ENCODE measurements at regions of chrX and their contacts with region 1.

Region 1: DNA sequence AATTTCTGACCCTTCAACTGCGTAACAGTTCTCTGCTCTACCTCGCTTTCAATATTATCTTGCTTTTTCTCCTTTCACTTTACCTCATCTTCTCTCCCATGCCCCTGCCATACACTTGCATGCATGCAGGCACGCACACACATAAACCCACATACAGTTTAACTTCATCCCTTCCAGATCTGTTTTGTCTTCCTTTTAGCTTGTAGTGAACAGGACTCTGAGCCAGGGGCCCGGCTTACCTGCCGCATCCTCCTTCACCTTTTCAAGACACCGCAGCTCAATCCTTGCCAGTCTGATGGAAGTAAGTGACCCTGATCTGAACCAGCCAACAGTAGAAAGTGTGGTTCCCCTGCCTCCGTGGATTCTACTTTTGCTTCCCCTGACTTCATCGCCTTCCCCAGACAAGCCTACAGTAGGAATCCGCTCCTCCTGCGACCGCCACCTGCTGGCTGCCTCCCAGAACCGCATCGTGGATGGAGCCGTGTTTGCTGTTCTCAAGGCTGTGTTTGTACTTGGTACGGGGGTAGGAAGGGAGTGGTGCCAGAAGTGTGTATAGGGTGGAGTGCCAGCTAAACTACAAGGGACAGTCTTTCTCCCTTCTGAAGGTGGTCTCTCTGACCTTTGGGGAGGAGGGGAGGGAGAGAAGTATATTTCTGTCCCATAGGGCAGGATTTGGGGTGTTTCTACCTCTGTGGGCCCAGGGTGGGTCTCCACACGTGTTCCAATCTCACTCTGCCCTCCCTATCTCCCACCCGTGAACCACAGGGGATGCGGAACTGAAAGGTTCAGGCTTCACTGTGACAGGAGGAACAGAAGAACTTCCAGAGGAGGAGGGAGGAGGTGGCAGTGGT is 10.7 kb downstream of the MED12 start:
- DNase-seq: peak; percentile 62
- H3K4me3 ChIP-seq: no peak overlapping the region
- H3K27ac ChIP-seq: no peak overlapping the region
- H3K4me1 ChIP-seq: no peaks in the 10 kb centered on the region
- CTCF ChIP-seq: peak; percentile 80

Region 2: DNA sequence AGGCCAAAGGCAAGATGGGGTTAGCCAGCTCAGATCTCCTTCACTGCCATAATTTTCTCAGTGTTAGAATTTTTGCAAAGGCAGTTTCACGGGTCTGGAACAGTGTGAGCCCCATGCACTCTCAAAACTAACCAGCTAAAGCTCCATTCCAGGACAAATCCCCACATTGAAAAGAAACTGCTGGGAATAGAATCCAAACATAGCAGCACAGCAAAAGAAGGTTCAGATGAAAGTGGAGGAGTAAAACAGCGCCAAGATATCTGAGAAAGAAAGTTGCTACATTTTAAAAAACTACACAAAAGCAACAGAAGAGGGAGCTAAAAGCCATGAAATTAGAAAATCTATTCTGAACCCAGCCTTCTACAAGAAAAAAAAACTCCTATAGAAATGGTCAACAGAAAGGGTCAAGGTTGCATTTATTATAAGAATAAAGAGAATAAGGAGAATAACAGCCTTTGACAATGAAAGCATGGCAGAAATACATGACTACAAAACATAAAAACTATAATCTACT is 158.6 kb before region 1 on chrX:
- CTCF ChIA-PET with region 1: no interaction called
- POLR2A ChIA-PET with region 1: no interaction called
- intact Hi-C with region 1: loop called (anchors 5 kb)
- DNase-seq: peak; percentile 21
- H3K4me3 ChIP-seq: no peak overlapping the region
- H3K27ac ChIP-seq: no peak overlapping the region
- H3K4me1 ChIP-seq: no peaks in the 10 kb centered on the region
- CTCF ChIP-seq: peak; percentile 67

Region 3: DNA sequence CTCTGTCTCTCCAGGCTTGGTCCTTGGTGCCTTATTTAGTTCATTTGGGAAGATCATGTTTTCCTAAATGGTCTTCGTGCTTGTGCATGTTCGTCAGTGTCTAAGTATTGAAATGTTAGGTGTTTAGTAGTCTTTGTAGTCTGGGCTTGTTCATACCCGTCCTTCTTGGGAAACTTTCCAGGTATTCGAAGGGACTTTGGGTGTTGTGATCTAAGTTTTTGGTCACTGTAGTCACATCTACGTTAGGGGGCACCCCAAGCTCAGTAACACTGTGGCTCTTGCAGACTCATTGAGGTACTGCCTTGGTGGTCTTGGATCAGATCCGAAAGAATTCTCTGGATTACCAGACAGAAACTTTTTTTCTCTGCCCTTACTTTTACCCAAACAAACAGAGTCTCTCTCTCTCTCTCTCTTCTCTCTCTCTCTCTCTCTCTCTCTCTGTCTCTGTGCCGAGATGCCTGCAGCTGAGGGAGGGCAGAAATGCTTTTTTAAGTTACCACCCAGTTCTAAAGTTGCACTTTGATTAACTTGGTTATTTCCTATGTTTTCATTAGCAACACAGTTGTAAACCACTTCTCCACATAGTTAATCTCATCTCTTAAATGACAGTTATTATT is 130.6 kb before region 1 on chrX:
- CTCF ChIA-PET with region 1: no interaction called
- POLR2A ChIA-PET with region 1: no interaction called
- intact Hi-C with region 1: loop called (anchors 2 kb)
- DNase-seq: peak; percentile 46
- H3K4me3 ChIP-seq: no peak overlapping the region
- H3K27ac ChIP-seq: no peak overlapping the region
- H3K4me1 ChIP-seq: no peaks in the 10 kb centered on the region
- CTCF ChIP-seq: peak; percentile 70

Region 4: DNA sequence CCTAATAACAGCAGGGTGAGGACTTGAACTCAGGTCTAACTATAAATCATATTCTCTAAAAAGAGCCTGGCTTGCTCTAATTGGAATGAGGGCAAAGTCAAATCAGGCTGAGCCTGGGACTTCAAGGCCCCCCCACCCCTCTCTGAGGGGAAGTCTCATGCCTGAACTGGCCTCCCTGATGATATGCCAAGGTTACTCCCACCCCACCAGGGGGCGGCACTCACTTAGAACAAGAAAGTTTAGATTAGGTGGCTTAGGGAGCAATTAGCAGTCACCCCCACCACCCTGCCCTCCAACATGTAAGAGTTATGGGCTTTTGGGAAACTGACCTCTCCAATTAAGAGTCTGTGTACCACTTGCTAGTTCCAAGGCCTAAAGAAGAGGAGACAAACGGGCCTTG is 30.8 kb before region 1 on chrX:
- CTCF ChIA-PET with region 1: interaction called, 3 read pairs
- POLR2A ChIA-PET with region 1: no interaction called
- intact Hi-C with region 1: loop called (anchors 1 kb)
- DNase-seq: peak; percentile 77
- H3K4me3 ChIP-seq: no peak overlapping the region
- H3K27ac ChIP-seq: no peak overlapping the region
- H3K4me1 ChIP-seq: peaks cover 31% of the 10 kb centered on the region
- CTCF ChIP-seq: peak; percentile 78

Region 5: GRCh38 chrX:71181910-71182799 is 53.0 kb after region 1 on chrX:
- CTCF ChIA-PET with region 1: no interaction called
- POLR2A ChIA-PET with region 1: no interaction called
- intact Hi-C with region 1: no loop called
- DNase-seq: peak; percentile 90
- H3K4me3 ChIP-seq: peak overlapping the region; percentile 66
- H3K27ac ChIP-seq: peak overlapping the region; percentile 93
- H3K4me1 ChIP-seq: peaks cover 26% of the 10 kb centered on the region
- CTCF ChIP-seq: no peak

Measured in OCI-LY7 (cell line).